GM12878 (cell line): ENCODE measurements at regions of chr11 and their contacts with region 1.

Region 1: GRCh38 chr11:10792398-10792975 is 16.2 kb downstream of the EIF4G2 start:
- DNase-seq: peak; percentile 19
- ATAC-seq: peak; percentile 97
- H3K4me3 ChIP-seq: no peak overlapping the region
- H3K27ac ChIP-seq: no peak overlapping the region
- H3K4me1 ChIP-seq: peaks cover 4% of the 10 kb centered on the region
- H3K27me3 ChIP-seq: no peaks in the 10 kb centered on the region
- CTCF ChIP-seq: peak; percentile 95 to 97 (median 97)
- EP300 ChIP-seq: no peak
- POLR2A ChIP-seq: no peak
- RAD21 ChIP-seq: peak; percentile 96

Region 2: DNA sequence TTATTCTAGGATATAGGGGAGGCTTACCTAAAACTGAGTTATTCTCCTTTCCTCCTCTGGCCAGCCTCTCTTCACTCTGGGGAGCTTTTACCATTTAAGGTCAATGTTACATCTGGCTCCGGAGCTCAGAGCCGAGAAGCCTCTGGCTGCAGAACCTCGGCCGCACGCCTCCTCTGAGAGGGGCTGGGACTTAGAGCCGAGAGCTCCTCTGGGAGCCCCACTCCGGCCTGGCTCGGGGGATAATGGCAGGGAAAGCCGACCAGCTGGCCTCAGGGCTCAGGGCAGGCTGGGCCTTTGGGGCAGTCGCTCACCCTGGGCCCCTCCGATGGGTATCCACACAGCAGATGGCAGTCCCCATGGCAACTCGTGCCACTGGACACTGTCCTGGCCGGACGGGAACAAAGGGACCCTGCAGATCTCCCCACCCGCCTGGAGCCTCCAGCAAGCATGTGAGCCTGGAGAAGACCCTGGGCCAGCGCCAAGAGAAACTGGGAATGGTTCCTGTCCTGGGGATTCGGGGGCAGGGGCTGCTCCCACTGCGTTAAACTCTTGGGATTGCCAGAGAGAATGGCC is 98.9 kb before region 1 on chr11 and contains the start of gene IRAG1:
- CTCF ChIA-PET with region 1: no interaction called
- POLR2A ChIA-PET with region 1: no interaction called
- RAD21 ChIA-PET with region 1: no interaction called
- SMC1A ChIA-PET with region 1: no interaction called
- in situ Hi-C with region 1: no loop called
- intact Hi-C with region 1: no loop called
- DNase-seq: no peak
- ATAC-seq: no peak
- H3K4me3 ChIP-seq: no peak within 1 kb of the TSS
- H3K27ac ChIP-seq: no peak within 1 kb of the TSS
- H3K4me1 ChIP-seq: no peaks in the 10 kb centered on the region
- H3K27me3 ChIP-seq: peaks cover 0 to 6% of the 10 kb centered on the region in 2 experiments; a peak in 3 of 4 replicates
- CTCF ChIP-seq: no peak
- EP300 ChIP-seq: no peak
- POLR2A ChIP-seq: no peak
- RAD21 ChIP-seq: no peak
- polyA plus RNA-seq, gene IRAG1: 0.02 TPM in 1 of 2 experiments, not detected in the other

Region 3: DNA sequence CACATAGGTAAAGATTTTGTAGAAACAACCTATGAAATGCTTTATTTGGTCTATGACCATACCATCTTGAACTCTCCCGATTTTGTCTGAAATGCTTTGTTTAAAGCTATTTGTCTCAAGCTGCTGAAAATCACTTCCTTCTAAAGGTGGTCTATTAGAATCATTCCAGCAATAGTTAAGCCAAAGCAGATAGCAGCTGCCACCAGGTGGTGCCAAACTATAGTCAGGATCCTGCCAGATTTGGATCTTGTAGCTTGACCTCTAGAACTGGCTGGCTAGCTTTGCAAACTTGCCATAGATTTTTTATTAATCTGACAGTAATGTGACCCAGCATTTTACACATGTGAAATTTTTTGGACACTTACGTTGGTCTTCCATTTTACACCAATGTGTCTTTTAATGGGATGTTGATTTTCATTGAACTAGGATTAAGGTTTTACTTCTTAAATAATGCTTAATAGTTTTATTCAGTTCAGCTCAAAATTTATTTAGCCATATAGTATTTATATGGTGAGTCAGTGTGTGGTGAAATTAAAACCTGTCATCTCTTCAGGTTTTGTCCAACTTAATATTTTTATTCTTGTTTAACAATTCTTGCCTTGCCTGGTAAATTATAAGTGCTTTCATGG is 21.7 kb before region 1 on chr11:
- CTCF ChIA-PET with region 1: interaction called, 61 read pairs
- POLR2A ChIA-PET with region 1: interaction called, 3 read pairs
- RAD21 ChIA-PET with region 1: interaction called, 7 read pairs
- SMC1A ChIA-PET with region 1: interaction called, 8 read pairs
- in situ Hi-C with region 1: no loop called
- intact Hi-C with region 1: no loop called
- DNase-seq: no peak
- ATAC-seq: peak; percentile 84
- H3K4me3 ChIP-seq: no peak overlapping the region
- H3K27ac ChIP-seq: no peak overlapping the region
- H3K4me1 ChIP-seq: no peaks in the 10 kb centered on the region
- H3K27me3 ChIP-seq: no peaks in the 10 kb centered on the region
- CTCF ChIP-seq: peak; percentile 62 to 79 (median 69)
- EP300 ChIP-seq: no peak
- POLR2A ChIP-seq: no peak
- RAD21 ChIP-seq: peak; percentile 29

Region 4: DNA sequence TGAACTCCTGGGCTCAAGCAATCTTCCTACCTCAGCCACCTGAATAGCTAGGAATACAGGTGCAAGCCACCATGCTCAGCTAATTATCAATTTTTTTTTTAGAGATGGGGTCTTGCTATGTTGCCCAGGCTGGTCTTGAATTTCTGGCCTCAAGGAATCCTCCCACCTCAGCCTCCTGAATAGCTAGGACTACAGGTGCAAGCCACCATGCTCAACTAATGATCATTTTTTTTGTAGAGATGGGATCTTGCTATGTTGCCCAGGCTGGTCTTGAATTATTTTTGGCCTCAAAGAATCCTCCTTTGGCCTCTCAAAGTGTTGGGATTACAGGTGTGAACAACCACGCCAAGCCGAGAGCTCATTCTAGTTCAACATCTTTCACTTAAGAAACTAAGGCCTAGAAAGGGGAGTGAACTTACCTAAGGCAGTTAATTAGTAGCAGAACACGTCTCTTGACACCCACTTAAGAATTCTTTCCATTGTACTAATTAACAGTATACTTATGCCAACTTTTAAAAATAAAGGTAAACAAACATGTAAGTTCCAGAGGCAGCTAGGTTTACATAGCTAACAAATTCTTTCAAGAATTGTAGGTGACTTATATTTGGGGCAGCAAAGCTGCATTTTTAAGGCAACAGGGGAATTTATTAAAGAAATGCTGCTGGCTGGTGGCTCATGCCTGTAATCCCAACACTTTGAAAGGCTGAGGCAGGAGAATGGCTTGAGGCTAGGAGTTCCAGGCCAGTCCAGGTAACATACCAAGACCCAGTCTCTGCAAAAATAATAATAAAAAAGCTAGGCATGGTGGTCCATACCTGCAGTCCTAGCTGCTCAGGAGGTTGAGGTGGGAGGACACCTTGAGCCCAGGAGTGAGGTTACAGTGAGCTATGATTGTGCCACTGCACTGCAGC is 55.7 kb after region 1 on chr11:
- CTCF ChIA-PET with region 1: interaction called, 22 read pairs
- POLR2A ChIA-PET with region 1: no interaction called
- RAD21 ChIA-PET with region 1: no interaction called
- SMC1A ChIA-PET with region 1: no interaction called
- in situ Hi-C with region 1: no loop called
- intact Hi-C with region 1: no loop called
- DNase-seq: no peak
- ATAC-seq: no peak
- H3K4me3 ChIP-seq: no peak overlapping the region
- H3K27ac ChIP-seq: no peak overlapping the region
- H3K4me1 ChIP-seq: no peaks in the 10 kb centered on the region
- H3K27me3 ChIP-seq: no peaks in the 10 kb centered on the region
- CTCF ChIP-seq: no peak
- EP300 ChIP-seq: no peak
- POLR2A ChIP-seq: no peak
- RAD21 ChIP-seq: no peak

Region 5: DNA sequence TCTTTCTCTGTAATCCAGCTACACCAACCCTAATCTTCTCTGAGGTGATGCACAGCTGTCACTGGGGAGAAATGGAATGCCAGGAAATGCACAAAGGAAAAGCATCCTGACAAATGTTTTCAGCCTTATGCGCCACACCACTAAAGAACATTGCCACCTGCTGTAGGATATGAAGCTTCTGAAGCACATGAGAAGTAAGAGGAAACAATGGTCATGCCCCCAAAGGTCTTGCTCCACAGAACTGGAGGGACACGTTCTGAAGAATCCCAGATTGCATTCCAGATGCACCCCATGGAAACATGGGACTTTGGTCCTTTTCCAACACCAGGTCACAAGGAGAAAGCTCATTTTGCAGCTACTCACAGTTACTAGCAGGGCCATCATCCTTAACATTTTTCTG is 114.0 kb after region 1 on chr11:
- CTCF ChIA-PET with region 1: interaction called, 32 read pairs
- POLR2A ChIA-PET with region 1: no interaction called
- RAD21 ChIA-PET with region 1: interaction called, 4 read pairs
- SMC1A ChIA-PET with region 1: interaction called, 8 read pairs
- in situ Hi-C with region 1: no loop called
- intact Hi-C with region 1: no loop called
- DNase-seq: no peak
- ATAC-seq: no peak
- H3K4me3 ChIP-seq: no peak overlapping the region
- H3K27ac ChIP-seq: no peak overlapping the region
- H3K4me1 ChIP-seq: no peaks in the 10 kb centered on the region
- H3K27me3 ChIP-seq: no peaks in the 10 kb centered on the region; a peak in 2 of 4 replicates
- CTCF ChIP-seq: peak in 1 of 3 experiments; percentile 19; a peak in 1 of 6 replicates
- EP300 ChIP-seq: no peak
- POLR2A ChIP-seq: no peak
- RAD21 ChIP-seq: 0 out of 2 replicates have a peak, but pooled peaks have one; percentile 7

Region 6: GRCh38 chr11:11022125-11022730 is 229.7 kb after region 1 on chr11:
- CTCF ChIA-PET with region 1: interaction called, 46 read pairs
- POLR2A ChIA-PET with region 1: interaction called, 4 read pairs
- RAD21 ChIA-PET with region 1: interaction called, 26 read pairs
- SMC1A ChIA-PET with region 1: interaction called, 22 read pairs
- in situ Hi-C with region 1: loop called (anchors 5 kb)
- intact Hi-C with region 1: loop called (anchors 1 kb)
- DNase-seq: no peak
- ATAC-seq: peak; percentile 58; the same call in 2 of the 3 replicates
- H3K4me3 ChIP-seq: no peak overlapping the region
- H3K27ac ChIP-seq: no peak overlapping the region
- H3K4me1 ChIP-seq: no peaks in the 10 kb centered on the region
- H3K27me3 ChIP-seq: peaks cover 0 to 2% of the 10 kb centered on the region in 2 experiments; a peak in 1 of 4 replicates
- CTCF ChIP-seq: peak; percentile 20 to 46 (median 31); a peak in 3 of 6 replicates
- EP300 ChIP-seq: no peak
- POLR2A ChIP-seq: no peak
- RAD21 ChIP-seq: peak; percentile 38